ENCODE measurements at regions of chrX and their contacts with region 1.

Region 1: GRCh38 chrX:17964871-17965270 is 103.8 kb upstream of the RAI2 start:
- DNase-seq: no peak
- ATAC-seq: peak; percentile 86

Region 2: DNA sequence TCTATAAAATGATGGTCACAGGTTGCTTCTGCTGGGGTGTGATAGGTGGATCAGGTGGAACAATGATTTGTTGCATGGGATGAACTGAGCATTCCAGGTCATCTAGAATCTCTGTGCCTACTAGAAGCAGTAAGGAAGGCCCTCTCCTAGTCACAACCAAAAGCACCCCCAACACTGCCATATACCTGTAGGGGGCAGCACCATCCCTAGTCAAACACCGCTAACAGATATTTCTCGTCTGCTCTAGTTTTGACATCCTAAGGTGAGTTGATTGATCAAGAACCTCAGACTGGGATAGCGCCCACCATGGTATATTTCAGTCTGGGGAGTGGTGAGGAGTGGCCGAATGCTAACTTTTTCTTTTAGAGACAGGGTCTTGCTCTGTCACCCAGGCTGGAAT is 429.6 kb before region 1 on chrX:
- intact Hi-C with region 1: no loop called
- DNase-seq: no peak
- ATAC-seq: no peak

Region 3: GRCh38 chrX:17987783-17988182 is 22.9 kb after region 1 on chrX:
- intact Hi-C with region 1: loop called (anchors 1 kb)
- DNase-seq: no peak
- ATAC-seq: no peak

Measured in sciatic nerve (tissue), 2 donors.